OCI-LY7 (cell line): ENCODE measurements at regions of chr1 and their contacts with region 1.

Region 1: GRCh38 chr1:28248283-28249012 is 10.9 kb upstream of the SESN2 start:
- DNase-seq: peak; percentile 88
- H3K4me3 ChIP-seq: peak overlapping the region; percentile 72
- H3K27ac ChIP-seq: peak overlapping the region; percentile 88
- H3K4me1 ChIP-seq: peaks cover 58% of the 10 kb centered on the region
- CTCF ChIP-seq: peak; percentile 100

Region 2: GRCh38 chr1:27789540-27790041 is 458.9 kb before region 1 on chr1:
- CTCF ChIA-PET with region 1: no interaction called
- POLR2A ChIA-PET with region 1: no interaction called
- intact Hi-C with region 1: no loop called
- DNase-seq: no peak
- H3K4me3 ChIP-seq: no peak overlapping the region
- H3K27ac ChIP-seq: no peak overlapping the region
- H3K4me1 ChIP-seq: no peaks in the 10 kb centered on the region
- CTCF ChIP-seq: no peak

Region 3: GRCh38 chr1:27958513-27959399 is 289.7 kb before region 1 on chr1:
- CTCF ChIA-PET with region 1: no interaction called
- POLR2A ChIA-PET with region 1: no interaction called
- intact Hi-C with region 1: no loop called
- DNase-seq: no peak
- H3K4me3 ChIP-seq: no peak overlapping the region
- H3K27ac ChIP-seq: no peak overlapping the region
- H3K4me1 ChIP-seq: peaks cover 9% of the 10 kb centered on the region
- CTCF ChIP-seq: no peak

Region 4: GRCh38 chr1:28172713-28173150 is 75.7 kb before region 1 on chr1:
- CTCF ChIA-PET with region 1: no interaction called
- POLR2A ChIA-PET with region 1: interaction called, 5 read pairs
- intact Hi-C with region 1: loop called (anchors 1 kb)
- DNase-seq: peak; percentile 93
- H3K4me3 ChIP-seq: peak overlapping the region; percentile 77
- H3K27ac ChIP-seq: peak overlapping the region; percentile 97
- H3K4me1 ChIP-seq: peaks cover 79% of the 10 kb centered on the region
- CTCF ChIP-seq: no peak

Region 5: DNA sequence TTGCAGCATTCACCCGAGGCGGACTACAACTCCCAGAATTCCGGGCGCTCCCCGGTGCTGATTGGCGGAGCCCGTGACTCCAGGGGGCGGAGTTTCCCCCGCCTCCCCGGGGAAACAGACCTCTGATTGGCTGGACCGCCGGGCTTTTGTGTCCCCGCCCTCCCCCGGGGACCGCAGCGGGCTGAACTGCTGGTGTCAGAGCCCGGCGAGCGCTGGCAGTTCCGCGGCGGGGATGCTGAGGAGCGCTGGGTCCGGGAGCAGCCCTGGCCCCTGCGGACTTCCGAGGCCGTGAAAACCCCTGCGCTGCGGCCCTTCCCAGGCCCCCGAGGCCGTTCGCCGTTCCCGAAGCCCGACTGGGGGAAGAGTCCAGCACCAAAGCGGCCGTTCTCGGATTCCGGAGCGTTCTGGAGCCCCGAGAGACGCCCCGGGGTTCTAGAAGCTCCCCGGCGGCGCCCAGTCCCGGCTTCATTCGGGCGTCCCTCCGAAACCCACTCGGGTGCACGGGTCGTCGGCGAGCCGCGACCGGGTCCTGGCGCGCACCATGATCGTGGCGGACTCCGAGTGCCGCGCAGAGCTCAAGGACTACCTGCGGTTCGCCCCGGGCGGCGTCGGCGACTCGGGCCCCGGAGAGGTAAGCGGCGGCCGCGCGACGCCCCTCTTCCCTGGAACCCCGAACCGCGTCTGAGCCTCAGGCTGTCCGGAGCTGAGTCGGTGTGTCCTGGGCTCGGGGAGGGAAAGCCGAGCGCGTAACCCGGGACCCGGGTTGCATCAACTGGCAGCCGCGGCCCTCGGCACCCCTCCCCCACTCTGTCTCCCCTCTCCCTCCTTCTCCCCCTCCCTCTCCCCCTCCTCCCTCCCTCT is 11.1 kb after region 1 on chr1 and contains the start of gene SESN2:
- CTCF ChIA-PET with region 1: interaction called, 12 read pairs
- POLR2A ChIA-PET with region 1: interaction called, 36 read pairs
- intact Hi-C with region 1: loop called (anchors 1 kb)
- DNase-seq: peak; percentile 100
- H3K4me3 ChIP-seq: peak within 1 kb of the TSS; percentile 94
- H3K27ac ChIP-seq: peak within 1 kb of the TSS; percentile 18
- H3K4me1 ChIP-seq: peaks cover 24% of the 10 kb centered on the region
- CTCF ChIP-seq: no peak
- total RNA-seq, gene SESN2: 18.3 and 22.8 TPM in 2 replicates

Region 6: GRCh38 chr1:28280501-28280900 is 32.1 kb after region 1 on chr1:
- CTCF ChIA-PET with region 1: no interaction called
- POLR2A ChIA-PET with region 1: no interaction called
- intact Hi-C with region 1: no loop called
- DNase-seq: no peak
- H3K4me3 ChIP-seq: no peak overlapping the region
- H3K27ac ChIP-seq: no peak overlapping the region
- H3K4me1 ChIP-seq: no peaks in the 10 kb centered on the region
- CTCF ChIP-seq: no peak

Region 7: DNA sequence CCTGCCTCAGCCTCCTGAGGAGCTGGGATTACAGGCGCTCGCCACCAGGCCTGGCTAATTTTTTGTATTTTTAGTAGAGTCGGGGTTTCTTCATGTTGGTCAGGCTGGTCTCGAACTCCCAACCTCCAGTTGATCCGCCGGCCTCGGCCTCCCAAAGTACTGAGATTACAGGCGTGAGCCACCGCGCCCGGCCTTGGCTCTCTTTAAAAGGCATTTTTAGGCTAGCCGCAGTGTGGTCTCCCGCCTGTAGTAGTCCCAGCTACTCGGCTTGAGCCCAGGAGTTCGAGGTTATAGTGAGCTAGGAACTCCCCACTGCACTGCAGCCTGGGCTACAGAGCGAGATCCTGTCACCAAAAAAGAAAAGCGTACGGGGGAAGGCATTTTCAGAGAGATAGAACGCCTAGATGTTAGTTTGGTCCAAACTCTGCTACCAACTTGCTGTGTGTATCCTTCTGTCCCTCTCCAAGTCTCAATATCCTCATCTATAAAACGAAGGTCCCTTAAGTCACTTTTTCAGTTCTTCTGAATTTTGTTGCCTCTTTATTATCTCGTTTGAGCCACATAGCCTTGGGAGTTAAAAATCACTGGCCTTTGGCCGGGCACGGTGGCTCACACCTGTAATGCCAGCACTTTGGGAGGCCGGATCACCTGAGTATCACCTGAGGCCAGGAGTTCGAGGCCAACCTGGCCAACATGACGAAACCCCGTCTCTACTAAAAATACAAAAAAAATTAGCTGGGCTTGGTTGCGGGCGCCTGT is 81.1 kb after region 1 on chr1:
- CTCF ChIA-PET with region 1: no interaction called
- POLR2A ChIA-PET with region 1: interaction called, 14 read pairs
- intact Hi-C with region 1: loop called (anchors 2 kb)
- DNase-seq: peak; percentile 60
- H3K4me3 ChIP-seq: peak overlapping the region; percentile 88
- H3K27ac ChIP-seq: peak overlapping the region; percentile 88
- H3K4me1 ChIP-seq: peaks cover 37% of the 10 kb centered on the region
- CTCF ChIP-seq: peak; percentile 29

Region 8: GRCh38 chr1:28369371-28370238 is 121.2 kb after region 1 on chr1 and contains the start of gene PHACTR4:
- CTCF ChIA-PET with region 1: no interaction called
- POLR2A ChIA-PET with region 1: interaction called, 3 read pairs
- intact Hi-C with region 1: loop called (anchors 1 kb)
- DNase-seq: peak; percentile 93
- H3K4me3 ChIP-seq: peak within 1 kb of the TSS; percentile 81
- H3K27ac ChIP-seq: peak within 1 kb of the TSS; percentile 76
- H3K4me1 ChIP-seq: peaks cover 25% of the 10 kb centered on the region
- CTCF ChIP-seq: no peak
- total RNA-seq, gene PHACTR4: 16.7 and 17.8 TPM in 2 replicates

Region 9: DNA sequence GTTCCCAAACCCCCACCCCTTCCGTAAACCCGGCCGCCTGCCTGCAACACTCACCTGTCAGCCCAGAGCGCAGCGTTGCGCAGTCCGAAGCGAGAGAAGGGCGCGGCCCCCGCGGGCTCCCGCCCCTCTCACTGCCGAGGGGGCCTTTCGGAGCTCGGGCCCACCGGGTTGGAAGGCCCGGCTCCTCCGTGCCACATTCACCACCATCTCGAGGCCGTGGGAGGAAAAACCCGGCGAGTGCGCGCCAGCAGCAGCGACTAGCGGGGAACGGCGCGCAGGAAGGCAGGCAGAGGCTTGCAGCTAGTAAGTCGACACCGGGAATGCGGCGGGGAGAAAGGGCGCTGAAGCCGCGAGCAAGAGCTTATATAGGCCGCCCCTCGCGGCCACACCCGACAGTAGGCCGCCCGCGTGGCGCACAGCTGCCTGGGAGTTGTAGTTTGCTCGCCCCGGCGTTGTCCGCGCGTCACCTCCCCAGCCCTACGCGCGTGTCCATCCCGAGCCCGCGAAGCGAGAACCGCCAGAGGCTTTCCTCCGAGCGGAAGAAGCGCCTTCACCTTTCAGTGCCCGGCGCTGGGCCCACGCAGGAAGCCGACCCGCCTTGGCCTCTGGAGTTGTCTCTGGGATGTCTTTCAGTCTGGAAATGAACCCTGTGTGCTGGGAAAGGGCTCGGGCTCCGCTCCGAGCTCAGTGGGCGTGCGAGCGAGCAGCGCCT is 333.2 kb after region 1 on chr1:
- CTCF ChIA-PET with region 1: no interaction called
- POLR2A ChIA-PET with region 1: interaction called, 9 read pairs
- intact Hi-C with region 1: loop called (anchors 5 kb)
- DNase-seq: peak; percentile 96
- H3K4me3 ChIP-seq: peak overlapping the region; percentile 97
- H3K27ac ChIP-seq: peak overlapping the region; percentile 85
- H3K4me1 ChIP-seq: peaks cover 38% of the 10 kb centered on the region
- CTCF ChIP-seq: 0 out of 2 replicates have a peak, but pooled peaks have one; percentile 41